A549 (cell line): ENCODE measurements at regions of chr2 and their contacts with region 1.

Region 1: DNA sequence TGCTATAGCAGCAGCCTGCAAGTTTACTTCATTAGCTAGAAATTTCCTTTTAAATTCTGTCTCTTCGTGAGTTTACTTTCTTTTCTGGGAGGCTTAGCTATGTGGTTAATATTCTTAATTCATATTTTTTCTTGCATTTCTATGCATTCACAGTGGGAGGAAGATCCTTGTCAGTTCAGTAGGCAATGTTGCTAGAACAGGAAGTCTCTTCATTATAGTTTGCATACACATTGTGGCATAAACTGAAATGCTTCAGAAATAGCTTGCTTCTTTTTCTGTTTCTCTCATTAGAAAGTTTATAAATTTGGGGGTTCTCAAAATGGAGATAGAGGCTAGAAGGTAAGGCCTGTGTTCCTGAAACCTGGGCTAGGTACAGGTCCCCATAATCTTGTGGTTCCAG is 8.1 kb upstream of the ARHGAP15 start:
- DNase-seq: no peak
- ATAC-seq: no peak
- H3K4me3 ChIP-seq: no peak overlapping the region
- H3K27ac ChIP-seq: no peak overlapping the region
- H3K4me1 ChIP-seq: no peaks in the 10 kb centered on the region
- CTCF ChIP-seq: no peak
- EP300 ChIP-seq: no peak
- POLR2A ChIP-seq: no peak
- RAD21 ChIP-seq: no peak

Region 2: DNA sequence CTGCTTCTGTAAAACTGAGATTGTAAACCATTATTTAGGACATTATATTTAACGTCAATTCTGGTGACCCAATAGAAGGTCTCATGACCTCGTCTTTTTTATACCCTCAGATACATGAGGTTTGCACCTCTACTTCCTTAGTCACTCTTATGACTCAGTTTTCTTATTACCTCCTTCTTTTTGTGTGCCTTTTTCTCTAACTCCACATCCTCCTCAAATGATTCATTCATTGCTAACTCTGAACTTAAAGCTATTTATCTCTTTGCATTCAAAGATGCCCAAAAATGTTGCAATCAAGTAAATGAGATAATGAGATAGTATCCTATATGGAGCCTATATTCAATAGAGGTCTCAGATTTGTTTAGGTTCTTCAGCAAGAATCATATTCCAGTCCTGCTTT is 364.6 kb before region 1 on chr2:
- CTCF ChIA-PET with region 1: no interaction called
- POLR2A ChIA-PET with region 1: no interaction called
- DNase-seq: peak in 1 of 2 experiments; percentile 46
- ATAC-seq: peak; percentile 67 to 77; a peak in 5 of 6 replicates
- H3K4me3 ChIP-seq: no peak overlapping the region
- H3K27ac ChIP-seq: peak overlapping the region; percentile 44 to 52; a peak in 3 of 6 replicates
- H3K4me1 ChIP-seq: peaks cover 46% of the 10 kb centered on the region
- CTCF ChIP-seq: no peak
- EP300 ChIP-seq: no peak; a peak in 2 of 5 replicates
- POLR2A ChIP-seq: no peak
- RAD21 ChIP-seq: no peak

Region 3: GRCh38 chr2:143015656-143016055 is 105.4 kb before region 1 on chr2:
- CTCF ChIA-PET with region 1: no interaction called
- POLR2A ChIA-PET with region 1: no interaction called
- DNase-seq: no peak
- ATAC-seq: no peak
- H3K4me3 ChIP-seq: no peak overlapping the region
- H3K27ac ChIP-seq: no peak overlapping the region
- H3K4me1 ChIP-seq: no peaks in the 10 kb centered on the region
- CTCF ChIP-seq: no peak
- EP300 ChIP-seq: no peak
- POLR2A ChIP-seq: no peak
- RAD21 ChIP-seq: no peak

Region 4: DNA sequence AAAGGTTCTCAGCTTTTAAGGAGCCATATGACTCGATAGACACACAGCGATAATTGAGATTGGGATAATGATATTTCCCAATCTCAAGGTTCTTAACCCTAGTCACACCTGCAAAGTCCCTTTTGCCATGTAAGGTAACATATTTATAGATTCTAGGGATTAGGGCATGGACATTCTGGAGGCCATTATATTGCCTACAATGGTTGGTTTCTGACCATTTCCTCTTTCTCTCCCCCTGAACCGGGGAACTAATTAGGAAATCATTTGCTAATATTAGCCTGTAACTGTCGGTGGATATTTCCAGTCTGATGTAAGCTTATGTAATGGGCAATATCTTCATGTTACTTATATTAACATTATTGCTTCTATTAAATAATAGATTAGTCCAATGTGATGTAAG is 32.7 kb before region 1 on chr2:
- CTCF ChIA-PET with region 1: no interaction called
- POLR2A ChIA-PET with region 1: no interaction called
- DNase-seq: no peak
- ATAC-seq: no peak
- H3K4me3 ChIP-seq: no peak overlapping the region
- H3K27ac ChIP-seq: no peak overlapping the region
- H3K4me1 ChIP-seq: no peaks in the 10 kb centered on the region
- CTCF ChIP-seq: no peak
- EP300 ChIP-seq: no peak
- POLR2A ChIP-seq: no peak
- RAD21 ChIP-seq: no peak

Region 5: GRCh38 chr2:143110758-143111428 is 10.2 kb before region 1 on chr2:
- CTCF ChIA-PET with region 1: interaction called, 11 read pairs
- POLR2A ChIA-PET with region 1: no interaction called
- DNase-seq: peak; percentile 13 to 66
- ATAC-seq: peak; percentile 74 to 92
- H3K4me3 ChIP-seq: no peak overlapping the region
- H3K27ac ChIP-seq: no peak overlapping the region
- H3K4me1 ChIP-seq: no peaks in the 10 kb centered on the region
- CTCF ChIP-seq: peak; percentile 80
- EP300 ChIP-seq: no peak
- POLR2A ChIP-seq: no peak
- RAD21 ChIP-seq: peak; percentile 71 to 80